ENCODE measurements at regions of chr7 and their contacts with region 1.

Region 1: GRCh38 chr7:76291343-76292212 is 10.9 kb upstream of the HSPB1 start:
- DNase-seq: peak; percentile 97 to 100
- H3K4me3 ChIP-seq: peak overlapping the region; percentile 57
- H3K27ac ChIP-seq: peak overlapping the region; percentile 93
- H3K4me1 ChIP-seq: peaks cover 60% of the 10 kb centered on the region
- H3K27me3 ChIP-seq: no peaks in the 10 kb centered on the region
- CTCF ChIP-seq: peak; percentile 97

Region 2: GRCh38 chr7:76011442-76011861 is 280.1 kb before region 1 on chr7:
- CTCF ChIA-PET with region 1: no interaction called
- POLR2A ChIA-PET with region 1: no interaction called
- intact Hi-C with region 1: no loop called
- DNase-seq: no peak
- H3K4me3 ChIP-seq: no peak overlapping the region
- H3K27ac ChIP-seq: no peak overlapping the region
- H3K4me1 ChIP-seq: no peaks in the 10 kb centered on the region
- H3K27me3 ChIP-seq: no peaks in the 10 kb centered on the region
- CTCF ChIP-seq: no peak

Region 3: DNA sequence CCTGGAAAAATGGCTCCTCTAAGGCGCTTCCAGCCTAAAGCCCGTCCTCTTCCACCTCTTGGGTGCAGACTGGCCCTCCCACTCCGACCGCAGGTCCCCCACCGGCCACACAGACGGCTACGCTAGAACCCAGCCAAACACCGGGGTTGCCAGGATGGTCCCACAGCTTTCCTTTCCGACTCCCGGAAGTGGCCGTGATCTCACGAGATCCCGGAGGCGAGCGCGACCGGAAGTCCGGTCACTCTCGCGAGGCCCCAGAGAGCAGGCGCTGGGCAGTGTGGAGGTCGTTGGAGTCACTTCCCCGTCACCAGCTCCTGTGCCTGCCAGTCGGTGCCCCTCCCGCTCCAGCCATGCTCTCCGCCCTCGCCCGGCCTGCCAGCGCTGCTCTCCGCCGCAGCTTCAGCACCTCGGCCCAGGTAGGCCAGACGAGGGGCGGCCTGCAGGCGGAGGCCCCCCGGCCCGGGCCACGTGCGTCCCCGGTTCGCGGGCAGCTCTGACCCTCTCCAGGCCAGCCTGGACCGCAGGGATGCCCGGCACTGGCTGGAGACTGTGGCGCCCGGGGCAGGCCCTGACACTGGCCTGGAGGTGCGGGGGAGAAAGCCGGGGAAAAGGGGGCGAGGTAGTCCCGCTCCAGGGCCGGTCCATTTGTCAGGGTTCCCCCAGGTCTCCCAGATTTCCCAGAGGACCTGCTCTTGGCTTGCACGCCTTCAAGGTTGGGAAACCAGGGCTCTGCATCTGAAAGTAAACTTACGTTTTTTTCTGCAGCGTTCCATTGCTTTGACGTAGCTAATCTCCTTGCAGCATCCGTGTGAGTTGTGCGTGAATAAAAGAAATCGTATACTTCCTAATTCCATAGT is 243.5 kb before region 1 on chr7 and contains the starts of genes MDH2 and STYXL1:
- CTCF ChIA-PET with region 1: no interaction called
- POLR2A ChIA-PET with region 1: interaction called, 4 read pairs
- intact Hi-C with region 1: loop called (anchors 5 kb)
- DNase-seq: peak; percentile 93 to 97
- H3K4me3 ChIP-seq: peak within 1 kb of the TSS; percentile 89
- H3K27ac ChIP-seq: peak within 1 kb of the TSS; percentile 83
- H3K4me1 ChIP-seq: peaks cover 15% of the 10 kb centered on the region
- H3K27me3 ChIP-seq: no peaks in the 10 kb centered on the region
- CTCF ChIP-seq: no peak
- total RNA-seq, gene MDH2: 319 and 328 TPM in 2 replicates
- total RNA-seq, gene STYXL1: 77.7 and 98.2 TPM in 2 replicates

Region 4: GRCh38 chr7:76086070-76086469 is 205.5 kb before region 1 on chr7:
- CTCF ChIA-PET with region 1: no interaction called
- POLR2A ChIA-PET with region 1: no interaction called
- intact Hi-C with region 1: loop called (anchors 5 kb)
- DNase-seq: peak in 1 of 2 experiments; percentile 51
- H3K4me3 ChIP-seq: no peak overlapping the region
- H3K27ac ChIP-seq: peak overlapping the region; percentile 96
- H3K4me1 ChIP-seq: peaks cover 88% of the 10 kb centered on the region
- H3K27me3 ChIP-seq: no peaks in the 10 kb centered on the region
- CTCF ChIP-seq: no peak

Region 5: DNA sequence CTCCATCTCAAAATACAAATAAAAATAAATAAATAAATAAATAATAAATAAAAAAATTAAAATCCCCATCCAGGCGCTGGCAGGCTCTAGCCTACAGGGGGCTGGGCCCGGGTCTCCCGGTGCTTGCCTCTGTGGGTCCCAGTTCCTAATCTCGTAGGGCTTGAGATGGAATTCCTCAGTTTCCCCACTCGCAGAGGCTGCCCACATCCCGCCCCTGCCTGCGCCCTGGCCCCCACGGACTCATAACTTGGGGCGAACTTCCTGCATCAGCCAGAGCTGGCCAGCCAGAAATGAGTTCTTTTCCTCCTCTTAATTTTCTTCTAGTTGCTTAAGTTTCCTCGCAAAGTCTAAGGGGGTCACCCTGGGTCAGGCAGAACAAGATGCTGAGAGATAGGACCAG is 111.9 kb before region 1 on chr7:
- CTCF ChIA-PET with region 1: no interaction called
- POLR2A ChIA-PET with region 1: no interaction called
- intact Hi-C with region 1: loop called (anchors 1 kb)
- DNase-seq: no peak
- H3K4me3 ChIP-seq: no peak overlapping the region
- H3K27ac ChIP-seq: no peak overlapping the region
- H3K4me1 ChIP-seq: no peaks in the 10 kb centered on the region
- H3K27me3 ChIP-seq: no peaks in the 10 kb centered on the region
- CTCF ChIP-seq: no peak

Region 6: DNA sequence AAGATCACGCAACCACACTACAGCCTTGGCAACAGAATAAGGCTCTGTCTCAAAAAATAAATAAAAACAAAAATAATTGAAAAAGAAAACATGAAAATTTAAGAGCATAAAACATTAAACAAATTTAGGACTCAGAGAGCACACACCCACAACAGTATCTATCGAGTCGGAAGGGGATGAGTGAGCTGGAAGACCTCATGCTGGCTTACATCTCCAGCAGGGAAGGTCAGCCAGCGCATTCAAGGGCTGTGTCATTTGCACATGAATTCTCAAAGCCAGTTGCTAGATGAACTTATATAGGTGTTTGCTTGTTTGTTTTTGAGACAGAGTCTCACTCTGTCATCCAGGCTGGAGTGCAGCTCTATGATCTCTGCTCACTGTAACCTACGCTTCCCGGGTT is 39.6 kb before region 1 on chr7:
- CTCF ChIA-PET with region 1: no interaction called
- POLR2A ChIA-PET with region 1: no interaction called
- intact Hi-C with region 1: no loop called
- DNase-seq: no peak
- H3K4me3 ChIP-seq: no peak overlapping the region
- H3K27ac ChIP-seq: no peak overlapping the region
- H3K4me1 ChIP-seq: no peaks in the 10 kb centered on the region
- H3K27me3 ChIP-seq: no peaks in the 10 kb centered on the region
- CTCF ChIP-seq: no peak

Region 7: GRCh38 chr7:76262683-76263402 is 28.7 kb before region 1 on chr7:
- CTCF ChIA-PET with region 1: interaction called, 15 read pairs
- POLR2A ChIA-PET with region 1: no interaction called
- intact Hi-C with region 1: no loop called
- DNase-seq: peak; percentile 56 to 73
- H3K4me3 ChIP-seq: no peak overlapping the region
- H3K27ac ChIP-seq: no peak overlapping the region
- H3K4me1 ChIP-seq: no peaks in the 10 kb centered on the region
- H3K27me3 ChIP-seq: no peaks in the 10 kb centered on the region
- CTCF ChIP-seq: peak; percentile 83

Region 8: GRCh38 chr7:76423666-76424412 is 132.3 kb after region 1 on chr7:
- CTCF ChIA-PET with region 1: interaction called, 11 read pairs
- POLR2A ChIA-PET with region 1: no interaction called
- intact Hi-C with region 1: no loop called
- DNase-seq: no peak
- H3K4me3 ChIP-seq: no peak overlapping the region
- H3K27ac ChIP-seq: peak overlapping the region; percentile 78
- H3K4me1 ChIP-seq: peaks cover 48% of the 10 kb centered on the region
- H3K27me3 ChIP-seq: no peaks in the 10 kb centered on the region
- CTCF ChIP-seq: no peak